Activated naive CD4-positive, alpha-beta T cell treated with anti-CD3 and anti-CD28 coated beads for 36 hours (primary cell): ENCODE measurements at regions of chr1 and their contacts with region 1.

Region 1: GRCh38 chr1:25572708-25573600 is 29.5 kb downstream of the LDLRAP1 start:
- DNase-seq: peak; percentile 65
- H3K4me3 Mint-ChIP-seq: no peak overlapping the region
- H3K27ac Mint-ChIP-seq: no peak overlapping the region
- H3K4me1 Mint-ChIP-seq: peaks cover 42% of the 10 kb centered on the region
- H3K27me3 Mint-ChIP-seq: no peaks in the 10 kb centered on the region

Region 2: GRCh38 chr1:25543425-25544242 is 29.3 kb before region 1 on chr1 and contains the start of gene LDLRAP1:
- CTCF ChIA-PET with region 1: interaction called, 48 read pairs
- intact Hi-C with region 1: no loop called
- DNase-seq: peak; percentile 66
- H3K4me3 Mint-ChIP-seq: peak within 1 kb of the TSS; percentile 86
- H3K27ac Mint-ChIP-seq: peak within 1 kb of the TSS; percentile 64
- H3K4me1 Mint-ChIP-seq: peaks cover 37% of the 10 kb centered on the region
- H3K27me3 Mint-ChIP-seq: no peaks in the 10 kb centered on the region
- total RNA-seq, gene LDLRAP1: 19.1 to 19.7 TPM

Region 3: DNA sequence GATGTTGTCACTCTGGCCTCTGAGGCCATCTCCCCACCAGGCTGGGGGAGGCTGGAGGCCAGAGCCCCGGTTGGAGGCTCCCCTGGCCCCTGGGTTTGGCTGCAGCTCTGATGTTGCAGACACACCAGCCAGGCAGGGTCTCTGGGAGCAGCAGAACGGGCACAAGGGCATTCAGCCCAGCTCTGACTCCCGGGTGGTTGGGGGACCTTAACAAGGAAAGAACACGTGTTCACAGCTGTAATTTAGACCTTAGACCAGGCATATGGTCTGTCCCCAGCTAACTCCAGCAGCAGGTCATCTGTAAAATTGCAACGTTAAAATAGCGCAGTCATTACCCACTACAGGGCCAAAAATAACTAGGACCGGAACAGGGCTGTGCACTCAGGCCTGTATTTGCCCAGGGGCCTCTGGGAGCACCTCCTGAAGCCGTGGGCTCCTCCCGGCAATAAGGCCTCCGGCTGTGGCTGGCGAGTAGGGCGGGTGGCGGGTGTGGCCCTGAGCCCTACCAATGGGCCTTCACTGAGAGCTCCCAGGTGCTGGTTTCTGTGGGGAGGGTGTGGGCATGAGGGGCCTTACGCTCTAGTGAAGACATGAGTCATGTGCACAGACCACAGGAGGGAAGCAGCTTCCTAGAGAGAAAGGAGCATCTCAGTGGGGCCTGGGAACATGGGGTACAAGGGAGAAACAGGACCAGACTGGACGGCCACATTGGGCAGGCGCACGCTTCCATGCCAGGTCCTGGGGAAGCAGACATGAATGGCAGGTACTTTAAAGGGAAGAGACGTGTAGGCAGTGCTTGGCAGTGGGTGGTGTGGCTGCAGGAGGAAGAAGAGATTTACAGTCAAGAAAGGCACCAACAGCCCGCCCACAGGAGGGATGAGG is 23.4 kb before region 1 on chr1:
- CTCF ChIA-PET with region 1: interaction called, 48 read pairs
- intact Hi-C with region 1: no loop called
- DNase-seq: peak; percentile 95
- H3K4me3 Mint-ChIP-seq: peak overlapping the region; percentile 71
- H3K27ac Mint-ChIP-seq: peak overlapping the region; percentile 93
- H3K4me1 Mint-ChIP-seq: peaks cover 89% of the 10 kb centered on the region
- H3K27me3 Mint-ChIP-seq: no peaks in the 10 kb centered on the region

Region 4: DNA sequence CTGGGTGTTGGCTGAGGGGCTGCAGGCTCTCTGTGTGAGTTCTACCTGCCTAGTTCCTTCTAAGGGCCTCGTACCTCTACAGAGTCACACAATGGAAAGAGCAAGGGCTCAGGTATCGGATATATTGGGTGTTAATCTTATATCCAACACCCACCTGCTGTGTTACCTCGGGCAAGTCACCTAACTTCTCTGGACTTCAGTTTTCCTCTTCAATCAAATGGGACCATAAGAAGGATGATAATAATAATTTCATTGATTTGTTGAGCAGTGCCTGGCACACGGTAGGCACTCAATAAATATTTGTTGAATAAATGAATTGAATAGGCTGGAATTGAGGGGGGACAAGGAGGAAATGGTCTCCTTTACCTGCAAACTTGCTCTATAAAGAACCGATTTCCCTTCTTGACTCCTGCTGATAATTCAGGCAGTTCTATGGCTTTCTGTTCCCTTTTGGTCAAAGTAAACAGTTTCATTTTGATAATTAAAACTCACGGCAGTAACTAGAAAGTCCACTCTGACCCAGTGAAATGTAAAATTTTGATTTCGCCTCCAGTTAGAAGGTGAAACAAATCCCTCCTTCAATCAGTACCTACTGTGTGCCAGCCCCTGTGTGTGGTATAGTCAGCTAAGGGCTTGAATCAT is 27.1 kb after region 1 on chr1:
- CTCF ChIA-PET with region 1: interaction called, 12 read pairs
- intact Hi-C with region 1: no loop called
- DNase-seq: no peak
- H3K4me3 Mint-ChIP-seq: no peak overlapping the region
- H3K27ac Mint-ChIP-seq: no peak overlapping the region
- H3K4me1 Mint-ChIP-seq: peaks cover 2% of the 10 kb centered on the region
- H3K27me3 Mint-ChIP-seq: no peaks in the 10 kb centered on the region